A549 (cell line): ENCODE measurements at regions of chr2 and their contacts with region 1.

Region 1: DNA sequence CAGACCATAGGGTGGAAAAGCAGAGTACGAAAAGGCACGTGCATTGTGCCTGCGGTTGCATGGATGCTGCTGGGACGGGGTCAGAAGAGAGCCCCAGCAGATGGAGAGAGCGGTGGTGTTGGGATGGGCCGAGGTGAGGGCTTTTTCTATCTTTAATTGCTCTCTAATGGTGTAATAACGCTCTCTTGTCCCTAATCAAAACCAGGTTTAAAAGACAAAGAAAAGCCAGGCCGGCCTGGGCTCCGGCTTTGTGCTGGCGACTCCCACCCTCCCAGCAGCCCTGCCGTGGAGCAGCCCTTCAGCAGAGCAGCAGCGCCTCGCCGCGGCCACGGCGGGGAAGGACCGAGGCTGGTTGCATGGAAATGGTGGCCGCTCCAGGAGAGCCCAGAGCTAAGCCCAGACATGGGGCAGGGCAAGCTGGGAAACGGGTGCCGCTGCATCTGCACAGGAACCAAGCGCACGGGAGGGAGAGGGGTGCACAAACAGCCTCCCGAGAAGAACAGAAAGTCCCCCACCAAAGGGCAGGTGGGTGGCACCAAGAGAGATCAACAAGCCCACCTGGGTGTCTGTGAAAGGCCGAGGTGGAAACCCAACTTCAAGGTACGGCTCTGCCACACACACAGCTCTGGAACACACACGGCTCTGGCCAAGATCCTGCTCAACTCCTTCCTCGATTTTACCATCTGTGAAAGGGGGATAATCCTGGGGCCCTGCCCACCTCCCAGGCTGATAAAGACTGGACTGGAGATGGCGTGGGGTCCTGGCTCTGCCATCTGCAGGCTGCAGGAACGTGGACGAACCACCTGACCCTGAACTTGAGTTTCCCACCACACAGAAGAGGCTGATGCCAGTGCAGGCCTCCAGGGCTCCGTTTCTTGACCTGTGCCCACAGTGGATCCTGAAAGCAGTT is 15.0 kb downstream of the HS1BP3 start:
- DNase-seq: peak; percentile 78 to 87
- ATAC-seq: peak; percentile 90 to 98
- H3K4me3 ChIP-seq: no peak overlapping the region
- H3K27ac ChIP-seq: peak overlapping the region; percentile 50 to 75; a peak in 4 of 6 replicates
- H3K4me1 ChIP-seq: peaks cover 21% of the 10 kb centered on the region
- CTCF ChIP-seq: peak; percentile 97
- EP300 ChIP-seq: no peak
- POLR2A ChIP-seq: no peak
- RAD21 ChIP-seq: peak; percentile 100

Region 2: GRCh38 chr2:20424300-20425290 is 211.3 kb before region 1 on chr2:
- CTCF ChIA-PET with region 1: interaction called, 109 read pairs
- POLR2A ChIA-PET with region 1: no interaction called
- DNase-seq: no peak
- ATAC-seq: 0 out of 6 replicates have a peak, but pooled peaks of 1 of the 2 experiments have one; percentile 10
- H3K4me3 ChIP-seq: no peak overlapping the region
- H3K27ac ChIP-seq: peak overlapping the region in 1 of 2 experiments; percentile 3; a peak in 1 of 6 replicates
- H3K4me1 ChIP-seq: 0 out of 3 replicates have a peak, but pooled peaks cover 2% of the 10 kb centered on the region
- CTCF ChIP-seq: no peak
- EP300 ChIP-seq: no peak
- POLR2A ChIP-seq: no peak
- RAD21 ChIP-seq: no peak

Region 3: GRCh38 chr2:20572221-20572620 is 63.7 kb before region 1 on chr2:
- CTCF ChIA-PET with region 1: no interaction called
- POLR2A ChIA-PET with region 1: no interaction called
- DNase-seq: no peak
- ATAC-seq: no peak
- H3K4me3 ChIP-seq: no peak overlapping the region
- H3K27ac ChIP-seq: peak overlapping the region in 1 of 2 experiments; percentile 29; a peak in 2 of 6 replicates
- H3K4me1 ChIP-seq: peaks cover under 1% of the 10 kb centered on the region; the same call in 1 of the 3 replicates
- CTCF ChIP-seq: no peak
- EP300 ChIP-seq: no peak
- POLR2A ChIP-seq: no peak
- RAD21 ChIP-seq: no peak

Region 4: DNA sequence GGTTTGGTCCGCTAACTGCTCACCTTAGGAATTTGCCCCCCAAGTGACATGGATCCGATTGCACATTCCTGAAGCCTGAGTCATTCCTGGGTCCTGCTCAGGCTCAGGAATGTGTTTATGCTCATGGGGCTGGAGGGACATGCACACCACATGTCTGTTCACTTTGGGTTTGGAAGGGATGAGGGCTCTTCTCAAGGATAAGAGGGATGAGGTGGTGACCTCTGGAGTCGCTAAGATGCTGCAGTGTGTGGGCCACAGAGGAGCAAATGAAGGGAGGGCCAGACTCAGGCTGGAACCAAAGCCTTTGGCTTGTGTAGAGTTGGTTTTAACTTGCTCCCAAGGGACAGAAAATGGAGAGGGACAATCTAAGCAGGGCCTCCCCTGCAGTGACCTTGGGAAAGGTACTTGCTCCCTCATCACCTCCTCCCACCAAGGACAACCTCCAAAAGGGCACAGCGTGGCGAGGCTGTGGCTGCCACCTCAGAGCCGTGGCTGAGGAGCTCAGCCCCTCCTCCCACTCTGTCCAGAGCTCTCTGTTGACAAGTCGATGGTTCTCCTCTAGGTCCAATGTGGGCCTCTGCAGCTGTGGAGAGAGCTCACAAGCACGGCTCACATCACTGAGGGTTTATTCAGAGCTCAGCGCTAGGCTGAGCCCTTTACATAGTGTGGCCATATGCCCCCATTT is 51.2 kb before region 1 on chr2:
- CTCF ChIA-PET with region 1: interaction called, 15 read pairs
- POLR2A ChIA-PET with region 1: no interaction called
- DNase-seq: peak; percentile 70 to 89
- ATAC-seq: peak; percentile 67 to 84
- H3K4me3 ChIP-seq: no peak overlapping the region
- H3K27ac ChIP-seq: peak overlapping the region; percentile 70 to 90
- H3K4me1 ChIP-seq: peaks cover 46% of the 10 kb centered on the region
- CTCF ChIP-seq: no peak
- EP300 ChIP-seq: peak; percentile 13 to 48; a peak in 1 of 5 replicates
- POLR2A ChIP-seq: no peak
- RAD21 ChIP-seq: peak in 1 of 2 experiments; percentile 2; a peak in 1 of 5 replicates

Region 5: DNA sequence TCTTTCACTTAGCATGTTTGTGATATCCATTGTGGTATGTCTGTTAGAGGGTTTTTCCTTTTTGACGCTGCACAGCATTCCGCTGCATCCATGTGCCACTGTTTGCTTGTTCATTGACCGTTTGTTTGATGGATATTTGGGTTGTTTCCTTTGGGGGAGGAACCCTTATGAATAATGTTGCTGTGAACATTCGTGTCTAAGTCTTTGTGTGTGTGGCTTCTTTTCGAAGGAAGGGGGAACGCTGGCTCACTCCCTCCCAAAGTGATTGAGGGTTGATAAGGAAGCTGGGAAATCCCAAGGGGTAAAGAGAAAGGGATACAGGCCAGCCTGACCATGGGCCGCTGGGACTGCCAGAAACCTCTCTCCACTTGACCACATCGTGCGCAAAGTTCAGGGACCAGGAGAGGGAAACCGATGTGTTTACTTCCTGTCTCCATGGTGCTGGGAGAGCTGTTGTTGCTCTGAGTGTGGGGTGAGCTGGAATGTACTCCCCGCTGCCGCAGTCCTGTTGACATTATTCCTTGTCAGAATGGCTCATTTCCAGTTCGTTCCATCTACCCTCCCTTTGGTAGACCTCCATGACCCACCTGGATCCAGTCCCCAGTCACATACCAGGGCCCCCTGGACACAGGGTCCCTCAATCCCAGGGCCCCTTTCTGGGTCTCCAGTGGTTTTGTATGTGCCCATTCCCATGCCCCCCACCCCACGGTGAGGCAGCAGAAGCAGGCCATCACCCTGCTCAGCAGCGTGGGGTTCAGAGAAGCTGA is 24.7 kb before region 1 on chr2:
- CTCF ChIA-PET with region 1: interaction called, 18 read pairs
- POLR2A ChIA-PET with region 1: no interaction called
- DNase-seq: no peak
- ATAC-seq: no peak
- H3K4me3 ChIP-seq: no peak overlapping the region
- H3K27ac ChIP-seq: no peak overlapping the region
- H3K4me1 ChIP-seq: no peaks in the 10 kb centered on the region
- CTCF ChIP-seq: no peak
- EP300 ChIP-seq: no peak
- POLR2A ChIP-seq: no peak
- RAD21 ChIP-seq: no peak

Region 6: DNA sequence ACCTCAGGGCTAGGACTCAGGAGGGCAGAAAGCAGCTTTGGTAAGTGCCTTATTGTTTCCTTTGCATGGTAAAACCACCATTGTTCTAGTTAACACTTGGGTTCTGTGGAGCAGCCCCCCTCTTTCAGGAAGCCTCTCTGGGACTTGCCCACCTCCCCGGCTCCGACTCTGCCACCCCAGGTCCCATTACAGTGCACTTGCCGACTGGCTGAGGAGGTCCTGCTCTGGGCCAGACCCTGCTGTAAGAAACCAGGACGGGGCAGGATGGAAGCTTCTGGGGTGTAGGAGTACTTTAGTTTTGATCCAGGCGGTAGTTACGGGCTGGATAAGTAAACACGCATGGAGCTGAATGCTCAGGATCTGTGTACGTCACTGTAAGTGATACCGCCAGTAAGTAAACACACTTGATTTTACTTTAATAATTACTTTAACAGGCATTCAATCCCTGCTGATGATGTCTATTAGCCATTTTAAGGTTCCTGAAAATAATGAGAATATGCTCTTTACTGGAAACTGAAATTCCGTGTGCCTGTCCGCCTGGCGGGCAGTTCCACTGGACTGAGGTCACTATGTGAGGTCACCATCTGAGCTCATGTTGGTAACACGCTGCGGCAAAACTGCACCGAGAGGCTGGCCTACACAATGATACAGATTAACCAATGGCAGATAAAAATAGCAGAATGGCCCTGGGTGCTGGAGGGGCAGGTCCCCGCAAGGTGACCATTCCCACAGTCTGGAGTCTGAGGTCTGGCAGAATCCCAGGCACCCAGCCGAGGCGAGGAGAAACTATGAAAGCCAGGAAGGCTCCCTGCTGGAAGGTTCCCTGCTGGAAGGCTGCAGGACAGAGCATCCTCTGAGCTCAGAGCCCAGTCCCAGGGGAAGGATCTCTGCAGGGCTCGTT is 10.2 kb before region 1 on chr2:
- CTCF ChIA-PET with region 1: interaction called, 30 read pairs
- POLR2A ChIA-PET with region 1: no interaction called
- DNase-seq: no peak
- ATAC-seq: no peak
- H3K4me3 ChIP-seq: no peak overlapping the region
- H3K27ac ChIP-seq: no peak overlapping the region
- H3K4me1 ChIP-seq: no peaks in the 10 kb centered on the region
- CTCF ChIP-seq: no peak
- EP300 ChIP-seq: no peak
- POLR2A ChIP-seq: no peak
- RAD21 ChIP-seq: no peak